ENCODE measurements at regions of chr1 and their contacts with region 1.

Region 1: GRCh38 chr1:63367215-63368103 is at the start of gene ALG6:
- H3K4me3 Mint-ChIP-seq: peak within 1 kb of the TSS; percentile 84
- H3K27ac Mint-ChIP-seq: peak within 1 kb of the TSS; percentile 85
- H3K4me1 Mint-ChIP-seq: peaks cover 13% of the 10 kb centered on the region
- H3K27me3 Mint-ChIP-seq: peaks cover 7% of the 10 kb centered on the region

Region 2: DNA sequence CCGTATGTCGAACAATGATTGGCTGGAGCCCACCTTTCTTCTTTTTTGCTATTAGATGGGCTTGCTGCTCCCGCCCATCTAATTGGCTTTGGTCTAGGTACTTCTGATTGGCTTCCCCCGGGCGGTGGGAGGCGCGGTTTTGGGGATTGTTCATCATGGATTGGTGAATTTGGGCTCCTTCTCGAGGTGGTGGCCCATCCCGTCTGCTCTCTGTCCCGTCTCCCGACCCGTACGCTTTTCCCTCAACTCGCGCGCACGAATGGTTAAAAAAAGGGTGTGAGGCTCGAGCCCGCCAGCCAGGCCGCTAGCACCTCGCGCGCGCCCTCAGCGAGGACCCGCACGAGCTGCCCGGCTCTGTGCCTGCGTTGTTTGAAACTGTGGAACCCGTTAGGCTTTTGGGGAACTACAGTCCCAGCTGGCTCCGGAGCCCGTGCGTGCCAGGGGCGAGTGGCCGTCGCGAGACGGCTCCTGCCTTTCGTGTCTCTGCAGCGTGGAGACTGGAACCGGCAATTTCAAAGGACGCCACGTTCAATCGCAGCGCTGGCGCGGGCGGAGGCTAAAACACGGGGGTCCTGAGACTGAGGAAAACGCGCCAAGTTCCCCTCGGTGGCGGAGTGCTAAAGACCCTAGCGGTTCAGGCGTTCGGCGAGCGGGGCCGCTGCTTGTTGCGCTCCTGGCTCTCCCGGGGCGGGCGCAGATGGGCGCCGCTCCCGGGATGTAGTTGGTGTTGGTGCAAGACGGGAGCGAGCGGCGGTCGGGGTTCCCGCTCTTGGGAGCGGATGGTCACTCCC is 930.8 kb before region 1 on chr1 and contains the start of gene USP1:
- intact Hi-C with region 1: loop called (anchors 5 kb)
- H3K4me3 Mint-ChIP-seq: peak within 1 kb of the TSS; percentile 94
- H3K27ac Mint-ChIP-seq: peak within 1 kb of the TSS; percentile 99
- H3K4me1 Mint-ChIP-seq: peaks cover 35% of the 10 kb centered on the region
- H3K27me3 Mint-ChIP-seq: no peaks in the 10 kb centered on the region

Region 3: DNA sequence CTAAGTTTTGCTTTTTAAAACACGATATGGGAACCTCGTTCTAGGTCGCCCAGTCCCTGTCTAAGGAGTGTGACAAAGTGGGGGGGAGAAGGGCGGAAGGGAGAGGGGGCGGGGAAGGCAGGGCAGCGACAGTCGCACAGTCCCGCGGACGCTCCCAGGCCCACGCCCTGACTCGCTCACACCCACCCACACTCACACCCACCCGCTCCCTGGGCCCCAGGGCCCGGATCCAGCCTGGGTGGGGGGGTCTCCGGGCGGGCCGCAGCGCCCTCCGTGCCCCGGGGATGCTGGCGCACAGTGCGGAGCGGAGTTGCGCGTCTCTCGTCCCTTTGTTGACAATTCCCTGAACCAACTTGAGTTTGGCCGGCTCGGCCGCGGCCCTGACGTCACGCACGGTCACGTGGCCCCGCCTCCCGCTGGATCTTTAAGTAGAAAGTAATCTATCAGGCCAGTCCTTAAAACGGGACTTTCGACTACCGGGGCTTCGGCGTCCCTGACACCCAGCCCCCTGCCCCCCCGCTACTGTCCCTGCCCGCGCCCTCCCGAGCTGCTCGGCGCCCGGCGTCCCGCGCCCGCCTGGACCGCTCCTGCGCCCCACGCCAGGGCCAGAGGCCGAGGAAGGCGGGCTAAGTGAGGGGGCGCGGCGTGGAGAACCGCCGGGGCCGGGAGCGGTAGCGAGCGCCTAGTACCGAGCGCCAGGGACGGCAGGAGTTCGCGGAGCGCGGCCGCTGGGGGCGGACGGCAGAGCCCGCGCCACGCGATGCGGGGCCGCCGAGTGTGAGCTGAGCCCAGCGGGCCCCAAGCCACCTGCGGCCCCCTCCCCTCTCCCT is 45.1 kb before region 1 on chr1 and contains the start of gene FOXD3:
- intact Hi-C with region 1: loop called (anchors 5 kb)
- H3K4me3 Mint-ChIP-seq: peak within 1 kb of the TSS; percentile 71
- H3K27ac Mint-ChIP-seq: peak within 1 kb of the TSS; percentile 54
- H3K4me1 Mint-ChIP-seq: peaks cover 55% of the 10 kb centered on the region
- H3K27me3 Mint-ChIP-seq: peaks cover 83% of the 10 kb centered on the region

Region 4: GRCh38 chr1:63411066-63411465 is 43.6 kb after region 1 on chr1:
- intact Hi-C with region 1: no loop called
- H3K4me3 Mint-ChIP-seq: no peak overlapping the region
- H3K27ac Mint-ChIP-seq: no peak overlapping the region
- H3K4me1 Mint-ChIP-seq: no peaks in the 10 kb centered on the region
- H3K27me3 Mint-ChIP-seq: no peaks in the 10 kb centered on the region

Region 5: DNA sequence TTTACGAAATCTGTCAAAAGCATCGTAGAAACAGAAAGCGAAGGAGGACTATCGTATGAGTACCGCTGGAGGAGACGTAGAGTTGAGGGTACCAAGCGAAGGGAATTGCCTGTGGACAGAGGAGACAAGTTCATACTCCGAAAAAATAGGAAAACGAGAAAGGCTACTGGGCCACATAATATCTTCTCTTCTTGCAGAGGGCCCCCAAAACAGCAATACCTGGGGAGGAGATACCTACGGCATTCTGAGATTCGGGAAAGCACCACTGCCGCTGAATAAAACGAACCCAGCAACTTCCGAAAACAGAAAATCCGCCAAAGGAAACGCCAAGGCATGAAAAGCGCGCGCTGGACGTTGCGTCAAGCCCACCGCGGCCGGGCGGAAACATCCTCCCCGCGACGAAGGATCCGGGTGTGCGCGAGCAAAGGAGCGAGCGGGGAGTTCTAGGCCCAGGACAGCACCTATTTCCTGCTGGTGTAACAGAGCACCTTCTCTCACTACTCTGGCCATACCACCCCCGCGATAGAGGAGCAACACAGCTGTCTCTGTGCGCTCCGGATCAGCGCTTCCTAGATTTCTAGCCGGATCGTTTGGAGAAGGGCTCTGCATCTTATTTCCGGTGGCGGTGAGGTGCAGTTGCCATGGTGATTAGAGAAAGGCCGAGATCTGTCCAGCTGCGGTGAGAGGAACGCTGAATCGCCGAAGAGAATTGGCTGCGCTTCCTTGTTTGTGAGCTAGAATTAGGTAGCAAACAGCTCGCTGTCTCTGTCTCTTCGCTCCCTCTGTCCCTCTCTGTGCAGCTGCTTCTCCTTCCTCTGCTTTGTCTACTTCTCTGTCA is 155.7 kb after region 1 on chr1 and contains the starts of genes EFCAB7 and ITGB3BP:
- intact Hi-C with region 1: loop called (anchors 2 kb)
- H3K4me3 Mint-ChIP-seq: peak within 1 kb of the TSS; percentile 86
- H3K27ac Mint-ChIP-seq: peak within 1 kb of the TSS; percentile 95
- H3K4me1 Mint-ChIP-seq: peaks cover 7% of the 10 kb centered on the region
- H3K27me3 Mint-ChIP-seq: no peaks in the 10 kb centered on the region

Measured in dendritic cell treated with granulocyte-macrophage colony-stimulating factor and Interleukin-4, amounts not matched to agents 40 ng/mL and 50 ng/mL, for 4 days (primary cell).